Activated CD4-positive, alpha-beta T cell treated with anti-CD3 and anti-CD28 coated beads, Interleukin-2, amount 10 ng/mL, durations not matched to agents 24 days and 14 days (primary cell): ENCODE measurements at regions of chr19 and their contacts with region 1.

Region 1: DNA sequence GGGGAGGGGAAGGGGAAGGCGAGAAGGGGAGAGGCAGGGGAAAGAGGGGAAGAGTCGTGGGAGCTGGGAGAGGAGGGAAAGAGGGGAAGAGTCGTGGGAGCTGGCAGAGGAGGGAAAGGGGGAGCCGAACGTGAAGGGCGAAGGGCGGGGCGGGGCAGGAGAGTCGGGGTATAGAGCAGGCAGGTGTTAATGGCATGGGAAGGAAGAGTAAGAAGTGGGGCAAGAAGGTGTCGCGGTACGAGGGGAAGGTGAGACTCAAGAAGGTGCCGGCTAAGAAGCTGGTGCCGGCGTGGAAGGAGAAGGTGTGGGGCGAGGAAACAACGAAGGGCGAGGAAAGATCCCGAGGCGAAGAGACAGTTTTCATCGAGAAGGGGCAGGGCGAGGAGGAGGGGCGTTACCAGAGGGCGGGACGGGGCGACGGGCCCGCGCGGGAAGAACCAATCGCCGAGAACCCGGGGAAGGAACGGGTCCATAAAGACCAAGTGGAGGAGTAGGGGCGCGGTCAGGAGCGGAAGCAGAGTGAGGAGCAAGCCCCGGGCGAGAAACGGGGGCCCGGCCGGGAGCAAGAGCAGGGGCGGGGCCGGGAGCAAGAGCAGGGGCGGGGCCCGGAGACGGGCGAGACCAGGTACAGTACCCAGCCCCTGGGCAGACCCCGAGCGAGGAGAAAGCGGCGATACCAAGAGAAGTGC is 463 bp downstream of the CATSPERG start:
- DNase-seq: peak; percentile 98
- H3K4me3 Mint-ChIP-seq: peak overlapping the region; percentile 100
- H3K27ac Mint-ChIP-seq: peak overlapping the region; percentile 100
- H3K4me1 Mint-ChIP-seq: peaks cover 14% of the 10 kb centered on the region
- H3K27me3 Mint-ChIP-seq: no peaks in the 10 kb centered on the region

Region 2: GRCh38 chr19:38233740-38234251 is 102.3 kb before region 1 on chr19:
- intact Hi-C with region 1: loop called (anchors 2 kb)
- DNase-seq: peak; percentile 95
- H3K4me3 Mint-ChIP-seq: no peak overlapping the region
- H3K27ac Mint-ChIP-seq: no peak overlapping the region
- H3K4me1 Mint-ChIP-seq: peaks cover 6% of the 10 kb centered on the region
- H3K27me3 Mint-ChIP-seq: peaks cover 23% of the 10 kb centered on the region

Region 3: DNA sequence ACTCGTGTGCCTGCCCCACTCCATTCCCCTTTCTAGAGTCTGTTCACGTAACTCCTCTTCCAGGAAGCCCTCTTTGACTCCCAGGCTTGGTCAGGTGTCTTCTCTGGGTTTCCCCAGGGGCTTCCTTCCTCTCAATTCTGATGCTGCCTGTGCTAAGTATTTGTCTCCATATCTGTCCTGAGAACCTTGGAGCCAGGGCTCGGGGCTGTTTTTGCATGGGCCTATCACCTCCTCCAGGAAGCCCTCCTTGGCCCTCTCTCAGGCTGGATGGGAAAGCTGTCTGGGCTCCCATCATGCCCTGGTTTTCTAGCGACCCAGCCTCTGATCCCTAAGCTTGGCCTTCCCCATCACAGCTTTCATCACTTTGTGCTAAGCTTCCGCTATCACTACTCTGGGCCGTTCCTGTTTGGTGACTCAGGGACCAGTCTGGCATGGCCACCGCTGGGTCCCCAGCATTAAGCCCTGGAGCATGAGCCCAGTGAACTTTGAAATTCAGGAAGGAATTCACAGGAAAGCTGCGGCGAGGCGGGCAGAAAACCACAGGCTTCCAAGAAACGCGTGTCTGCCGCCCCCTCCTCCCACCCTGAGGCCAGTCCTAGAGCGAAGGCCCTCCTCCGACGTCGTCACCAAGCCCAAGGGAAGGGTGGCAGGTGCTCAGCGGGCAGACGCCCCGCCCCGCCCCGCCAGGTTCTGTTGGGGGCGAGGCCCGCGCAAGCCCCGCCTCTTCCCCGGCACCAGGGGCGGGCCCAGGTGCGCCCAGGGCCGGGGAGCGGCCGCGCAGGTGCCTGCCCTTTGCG is 72.2 kb before region 1 on chr19:
- intact Hi-C with region 1: loop called (anchors 1 kb)
- DNase-seq: peak; percentile 94
- H3K4me3 Mint-ChIP-seq: peak overlapping the region; percentile 88
- H3K27ac Mint-ChIP-seq: peak overlapping the region; percentile 95
- H3K4me1 Mint-ChIP-seq: peaks cover 39% of the 10 kb centered on the region
- H3K27me3 Mint-ChIP-seq: no peaks in the 10 kb centered on the region

Region 4: DNA sequence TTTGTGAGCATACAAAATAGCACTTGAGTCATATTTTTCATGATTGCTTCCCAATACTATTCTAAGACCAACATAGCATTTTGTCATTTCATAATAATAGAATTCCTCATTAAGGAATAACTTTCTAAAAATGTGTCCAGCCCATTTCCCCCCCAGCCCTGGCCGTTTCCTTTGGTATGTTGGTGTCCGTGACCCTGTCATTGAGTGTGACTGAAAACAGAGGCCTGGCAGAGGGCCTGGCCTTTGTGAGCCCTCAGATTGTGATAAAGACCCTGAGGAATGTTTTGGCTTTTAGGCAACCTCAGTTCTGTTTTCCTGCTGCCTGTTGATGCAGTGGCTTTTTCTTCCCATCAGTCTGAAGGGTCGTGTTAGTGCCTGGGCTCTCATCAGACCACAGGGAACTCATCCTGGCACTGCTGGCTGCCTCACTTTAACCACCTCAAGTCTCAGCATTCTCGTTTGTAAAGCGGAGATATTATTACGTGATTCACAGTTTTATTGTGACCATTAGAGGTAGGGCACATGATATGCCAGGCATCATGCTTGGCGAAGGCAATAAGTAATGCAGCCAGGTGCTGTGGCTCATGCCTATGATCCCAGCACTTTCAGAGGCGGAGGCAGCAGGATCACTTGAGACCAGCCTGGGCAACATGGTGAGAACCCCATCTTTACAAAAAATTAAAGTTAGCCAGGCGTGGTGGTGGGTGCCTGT is 58.0 kb before region 1 on chr19:
- intact Hi-C with region 1: no loop called
- DNase-seq: no peak
- H3K4me3 Mint-ChIP-seq: no peak overlapping the region
- H3K27ac Mint-ChIP-seq: no peak overlapping the region
- H3K4me1 Mint-ChIP-seq: peaks cover 18% of the 10 kb centered on the region
- H3K27me3 Mint-ChIP-seq: no peaks in the 10 kb centered on the region

Region 5: GRCh38 chr19:38361633-38362075 is 25.6 kb after region 1 on chr19:
- intact Hi-C with region 1: loop called (anchors 1 kb)
- DNase-seq: peak; percentile 93
- H3K4me3 Mint-ChIP-seq: peak overlapping the region; percentile 92
- H3K27ac Mint-ChIP-seq: peak overlapping the region; percentile 67
- H3K4me1 Mint-ChIP-seq: peaks cover 10% of the 10 kb centered on the region
- H3K27me3 Mint-ChIP-seq: peaks cover 31% of the 10 kb centered on the region

Region 6: DNA sequence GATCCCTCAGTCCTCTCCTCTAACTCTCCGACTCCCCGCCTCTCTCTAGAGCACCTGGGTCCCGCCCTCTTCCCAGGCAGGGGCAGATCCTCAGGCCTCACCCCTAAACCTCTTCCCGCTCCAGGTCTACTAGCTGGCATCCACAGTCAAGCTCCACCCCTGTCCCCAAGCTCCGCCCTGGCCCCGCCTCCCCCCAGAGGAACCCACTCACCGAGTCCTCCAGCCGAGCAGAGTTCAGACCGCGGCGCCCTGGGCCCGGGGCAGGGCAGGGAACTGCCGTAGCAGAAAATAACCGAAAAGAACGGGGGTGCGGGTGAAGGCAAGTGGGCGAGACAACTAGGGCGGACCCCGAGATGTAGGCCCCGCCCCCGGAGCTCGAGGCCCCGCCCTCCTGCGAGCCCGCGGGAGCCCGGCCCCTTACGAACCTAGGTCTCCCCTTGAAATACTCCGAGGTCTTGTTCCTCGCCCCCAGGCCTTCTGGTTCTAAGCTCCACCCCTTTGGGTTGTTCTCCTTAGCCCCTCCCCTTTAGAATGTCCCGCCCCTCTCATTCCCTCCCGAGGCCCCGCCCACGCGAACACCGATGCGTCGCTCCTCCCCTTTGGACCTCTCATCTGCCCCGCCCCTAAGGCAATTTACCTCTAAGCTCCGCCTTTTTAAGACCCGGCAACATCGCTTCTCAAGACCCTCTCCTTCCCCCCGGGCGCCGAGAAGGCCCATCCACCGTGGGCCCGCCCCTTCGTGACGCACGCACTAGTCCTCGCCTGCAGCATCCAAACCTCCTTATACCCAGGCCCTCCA is 51.7 kb after region 1 on chr19 and contains the start of gene GGN:
- intact Hi-C with region 1: loop called (anchors 1 kb)
- DNase-seq: peak; percentile 94
- H3K4me3 Mint-ChIP-seq: peak within 1 kb of the TSS; percentile 90
- H3K27ac Mint-ChIP-seq: peak within 1 kb of the TSS; percentile 72
- H3K4me1 Mint-ChIP-seq: peaks cover 17% of the 10 kb centered on the region
- H3K27me3 Mint-ChIP-seq: peaks cover 23% of the 10 kb centered on the region
- total RNA-seq, gene GGN: 0.47 and 1.0 TPM in 2 replicates

Region 7: GRCh38 chr19:38425810-38426466 is 89.8 kb after region 1 on chr19 and contains the start of gene RASGRP4:
- intact Hi-C with region 1: no loop called
- DNase-seq: peak; percentile 75
- H3K4me3 Mint-ChIP-seq: peak within 1 kb of the TSS; percentile 52
- H3K27ac Mint-ChIP-seq: peak within 1 kb of the TSS; percentile 86
- H3K4me1 Mint-ChIP-seq: peaks cover 27% of the 10 kb centered on the region
- H3K27me3 Mint-ChIP-seq: peaks cover 2% of the 10 kb centered on the region
- total RNA-seq, gene RASGRP4: 2.1 and 2.2 TPM in 2 replicates

Region 8: DNA sequence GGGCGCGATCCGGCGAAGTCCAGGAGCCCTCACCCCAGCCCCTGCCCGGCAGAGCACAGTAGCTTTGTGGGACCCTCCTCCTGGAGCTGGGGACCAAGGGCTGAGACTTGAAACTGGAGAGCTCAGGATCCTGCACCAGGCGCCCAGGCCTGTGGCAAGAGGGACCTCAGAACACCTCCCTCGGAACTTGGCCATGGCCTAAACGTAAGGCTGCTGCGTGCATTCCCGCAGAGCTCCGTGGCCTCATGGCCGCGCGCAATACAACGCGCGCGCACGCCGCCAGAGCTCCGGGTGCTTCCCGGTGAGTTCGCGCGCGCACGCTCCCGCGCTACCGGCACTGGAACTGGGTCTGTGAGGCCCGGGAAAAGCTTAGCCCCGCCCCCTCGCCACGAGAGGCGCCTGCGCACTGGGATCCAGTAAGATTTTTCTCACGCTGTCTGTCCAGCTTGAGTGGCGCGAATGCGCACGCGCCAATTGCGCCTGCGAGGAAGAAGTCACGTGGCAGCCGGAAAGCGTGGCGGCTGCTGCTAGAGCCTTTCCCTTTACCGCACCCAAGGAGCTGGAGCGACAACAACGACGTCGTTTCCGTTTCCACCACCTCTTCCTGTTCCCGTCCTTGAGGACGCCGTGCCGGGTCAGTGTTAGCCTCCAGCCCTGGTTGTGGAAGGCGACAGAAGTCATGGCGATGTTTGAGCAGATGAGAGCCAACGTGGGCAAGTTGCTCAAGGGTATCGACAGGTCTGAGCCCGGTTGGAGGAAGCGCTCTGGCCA is 282.7 kb after region 1 on chr19 and contains the start of gene EIF3K:
- intact Hi-C with region 1: loop called (anchors 1 kb)
- DNase-seq: peak; percentile 100
- H3K4me3 Mint-ChIP-seq: peak within 1 kb of the TSS; percentile 97
- H3K27ac Mint-ChIP-seq: peak within 1 kb of the TSS; percentile 95
- H3K4me1 Mint-ChIP-seq: peaks cover 35% of the 10 kb centered on the region
- H3K27me3 Mint-ChIP-seq: no peaks in the 10 kb centered on the region
- total RNA-seq, gene EIF3K: 321 and 322 TPM in 2 replicates